ENCODE measurements at regions of chr14 and their contacts with region 1.

Region 1: DNA sequence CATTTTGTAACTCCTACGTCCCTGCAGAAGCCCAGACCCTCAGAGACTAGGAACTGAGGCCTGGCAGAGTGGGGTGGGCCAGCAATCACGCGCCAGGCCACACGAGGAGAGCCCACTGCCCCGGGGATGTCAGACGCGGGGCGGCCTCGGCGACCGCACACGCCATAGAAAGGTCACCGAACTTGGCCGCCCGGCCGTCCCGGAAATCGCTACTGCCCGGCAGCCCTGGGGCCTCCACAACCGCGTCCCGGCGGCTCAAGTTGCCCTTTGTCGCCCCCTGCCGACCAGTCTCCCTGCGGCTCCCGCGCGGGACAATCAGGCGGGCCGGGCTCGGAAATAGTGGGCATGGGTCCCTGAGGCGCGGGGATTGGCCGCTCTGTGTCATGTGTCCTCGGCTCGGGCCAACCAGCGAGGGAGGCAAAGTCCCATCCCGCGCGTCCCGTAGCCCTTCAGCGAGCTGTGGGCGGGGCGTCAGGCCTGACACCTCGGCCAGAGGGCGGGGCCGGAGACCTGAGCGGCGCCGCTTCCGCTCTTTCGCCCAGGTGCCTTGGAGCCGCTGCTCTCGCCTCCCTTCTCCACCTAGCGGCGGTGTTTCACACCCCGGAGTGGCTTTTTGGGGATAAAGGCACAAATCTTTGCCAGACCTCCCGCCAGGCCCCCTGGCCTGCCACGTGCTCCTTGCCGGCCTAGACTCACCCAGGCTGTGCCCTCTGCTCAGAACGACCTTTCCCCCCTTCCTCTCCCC is 33.4 kb upstream of the DEGS2 start:
- DNase-seq: peak; percentile 97
- ATAC-seq: peak; percentile 98
- H3K4me3 ChIP-seq: peak overlapping the region; percentile 57 to 64
- H3K27ac ChIP-seq: peak overlapping the region; percentile 77
- H3K4me1 ChIP-seq: peaks cover 11 to 19% of the 10 kb centered on the region in 2 experiments
- H3K27me3 ChIP-seq: no peaks in the 10 kb centered on the region
- CTCF ChIP-seq: peak; percentile 69 to 83 (median 73)
- POLR2A ChIP-seq: peak; percentile 68
- RAD21 ChIP-seq: peak; percentile 84

Region 2: DNA sequence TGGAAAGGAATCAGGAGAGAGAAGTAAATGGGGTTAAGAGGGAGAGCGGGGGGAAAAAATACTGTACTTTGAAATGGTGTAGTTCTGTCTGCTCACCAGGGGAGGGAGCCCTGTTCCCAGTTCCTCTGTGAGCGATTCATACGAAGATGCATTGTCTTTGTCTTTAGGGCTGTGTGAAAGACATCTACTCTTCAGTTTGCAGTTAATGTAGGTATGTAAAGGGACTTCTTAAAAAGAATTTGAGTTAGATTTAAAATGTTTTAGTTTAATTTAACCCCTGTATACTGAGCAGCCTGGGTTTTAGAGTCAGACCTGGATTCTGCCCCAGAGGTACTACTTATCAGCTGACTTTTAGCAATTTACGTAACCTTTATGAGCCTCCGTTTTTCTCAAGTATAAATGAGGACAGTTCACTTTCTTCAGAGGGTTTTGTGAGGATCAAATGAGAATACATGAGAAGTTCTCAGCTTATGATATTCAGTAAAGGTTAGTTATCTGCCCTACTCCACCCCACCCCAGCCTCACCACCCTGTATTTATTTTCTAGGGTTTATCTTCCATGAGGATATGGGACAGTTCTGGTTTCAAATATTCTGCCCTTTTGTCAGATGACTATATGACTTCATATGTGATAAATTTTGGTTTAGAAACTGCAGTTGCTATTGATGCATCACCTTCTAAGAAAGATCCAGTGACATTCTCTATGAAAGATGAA is 210.2 kb before region 1 on chr14:
- CTCF ChIA-PET with region 1: interaction called, 17 read pairs
- POLR2A ChIA-PET with region 1: interaction called, 4 read pairs
- RAD21 ChIA-PET with region 1: interaction called, 3 to 4 read pairs
- intact Hi-C with region 1: loop called (anchors 1 kb)
- DNase-seq: peak; percentile 34
- ATAC-seq: peak; percentile 96
- H3K4me3 ChIP-seq: no peak overlapping the region
- H3K27ac ChIP-seq: no peak overlapping the region
- H3K4me1 ChIP-seq: no peaks in the 10 kb centered on the region
- H3K27me3 ChIP-seq: no peaks in the 10 kb centered on the region
- CTCF ChIP-seq: peak; percentile 79 to 92 (median 87)
- POLR2A ChIP-seq: no peak
- RAD21 ChIP-seq: peak; percentile 87

Region 3: GRCh38 chr14:100056964-100057795 is 135.7 kb before region 1 on chr14:
- CTCF ChIA-PET with region 1: no interaction called
- POLR2A ChIA-PET with region 1: no interaction called
- RAD21 ChIA-PET with region 1: no interaction called
- intact Hi-C with region 1: loop called (anchors 2 kb)
- DNase-seq: no peak
- ATAC-seq: peak; percentile 76
- H3K4me3 ChIP-seq: no peak overlapping the region
- H3K27ac ChIP-seq: no peak overlapping the region
- H3K4me1 ChIP-seq: no peaks in the 10 kb centered on the region
- H3K27me3 ChIP-seq: no peaks in the 10 kb centered on the region
- CTCF ChIP-seq: peak; percentile 19 to 41 (median 33); a peak in 2 of 6 replicates
- POLR2A ChIP-seq: no peak
- RAD21 ChIP-seq: peak; percentile 57

Region 4: GRCh38 chr14:100072783-100073346 is 120.0 kb before region 1 on chr14:
- CTCF ChIA-PET with region 1: interaction called, 8 read pairs
- POLR2A ChIA-PET with region 1: no interaction called
- RAD21 ChIA-PET with region 1: interaction called, 3 read pairs
- intact Hi-C with region 1: loop called (anchors 2 kb)
- DNase-seq: peak; percentile 13
- ATAC-seq: peak; percentile 72
- H3K4me3 ChIP-seq: no peak overlapping the region
- H3K27ac ChIP-seq: no peak overlapping the region
- H3K4me1 ChIP-seq: peaks cover 6 to 16% of the 10 kb centered on the region in 2 experiments
- H3K27me3 ChIP-seq: no peaks in the 10 kb centered on the region
- CTCF ChIP-seq: peak; percentile 30 to 55 (median 37); a peak in 4 of 6 replicates
- POLR2A ChIP-seq: no peak
- RAD21 ChIP-seq: peak; percentile 64

Region 5: GRCh38 chr14:100108042-100108825 is 84.6 kb before region 1 on chr14:
- CTCF ChIA-PET with region 1: interaction called, 10 read pairs
- POLR2A ChIA-PET with region 1: no interaction called
- RAD21 ChIA-PET with region 1: interaction called in 1 of 2 experiments, 3 read pairs
- intact Hi-C with region 1: loop called (anchors 2 kb)
- DNase-seq: peak; percentile 48
- ATAC-seq: peak; percentile 98
- H3K4me3 ChIP-seq: no peak overlapping the region
- H3K27ac ChIP-seq: no peak overlapping the region
- H3K4me1 ChIP-seq: peaks cover 0 to 13% of the 10 kb centered on the region in 2 experiments; a peak in 1 of 4 replicates
- H3K27me3 ChIP-seq: no peaks in the 10 kb centered on the region
- CTCF ChIP-seq: peak; percentile 86 to 94 (median 88)
- POLR2A ChIP-seq: no peak
- RAD21 ChIP-seq: peak; percentile 76

Region 6: DNA sequence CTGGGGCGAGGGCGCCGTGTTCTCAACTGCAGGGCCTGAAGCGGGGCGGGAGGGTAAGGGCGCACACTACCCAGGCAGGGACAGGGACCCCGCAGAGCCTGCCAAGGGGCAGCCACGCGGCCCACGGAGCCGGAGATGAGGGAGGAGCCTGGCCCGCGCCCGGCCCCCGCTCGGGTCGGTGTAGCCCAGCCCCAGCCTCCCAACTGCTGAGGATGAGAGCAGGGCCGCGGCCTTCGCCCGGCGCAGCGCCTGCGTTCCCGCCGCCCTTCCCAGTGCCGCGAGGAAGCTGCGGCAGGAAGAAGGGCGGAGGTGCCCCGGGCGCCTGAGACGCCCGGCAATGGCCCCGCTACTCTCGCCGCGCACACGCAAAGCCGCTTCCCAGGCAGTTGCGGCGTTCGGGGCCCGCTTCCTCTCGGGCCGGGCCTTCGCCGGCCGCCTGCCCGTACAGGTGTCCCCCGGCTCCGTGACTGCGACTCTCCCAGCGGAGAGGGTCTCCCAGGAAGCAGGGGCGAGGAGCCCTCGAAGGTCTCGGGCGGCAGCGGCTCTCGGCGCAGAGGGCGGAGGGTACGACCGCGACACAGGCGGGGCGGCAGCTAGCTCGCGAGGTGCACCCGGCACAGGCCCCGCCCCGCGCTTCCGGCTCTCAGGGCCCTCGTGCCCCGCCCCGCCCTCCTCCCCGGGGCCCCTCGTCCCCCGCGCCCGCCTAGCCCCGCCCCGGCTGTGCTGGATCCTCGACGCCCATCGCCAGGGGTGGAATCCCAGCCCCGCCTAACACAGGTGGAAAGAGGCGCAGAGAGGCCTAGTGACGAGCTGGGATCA is 21.3 kb after region 1 on chr14:
- CTCF ChIA-PET with region 1: interaction called, 23 read pairs
- POLR2A ChIA-PET with region 1: interaction called, 4 read pairs
- RAD21 ChIA-PET with region 1: no interaction called
- intact Hi-C with region 1: no loop called
- DNase-seq: peak; percentile 77
- ATAC-seq: peak; percentile 93
- H3K4me3 ChIP-seq: peak overlapping the region; percentile 75 to 84
- H3K27ac ChIP-seq: peak overlapping the region; percentile 93
- H3K4me1 ChIP-seq: peaks cover 20 to 34% of the 10 kb centered on the region in 2 experiments
- H3K27me3 ChIP-seq: no peaks in the 10 kb centered on the region
- CTCF ChIP-seq: no peak
- POLR2A ChIP-seq: peak; percentile 89
- RAD21 ChIP-seq: no peak

Region 7: DNA sequence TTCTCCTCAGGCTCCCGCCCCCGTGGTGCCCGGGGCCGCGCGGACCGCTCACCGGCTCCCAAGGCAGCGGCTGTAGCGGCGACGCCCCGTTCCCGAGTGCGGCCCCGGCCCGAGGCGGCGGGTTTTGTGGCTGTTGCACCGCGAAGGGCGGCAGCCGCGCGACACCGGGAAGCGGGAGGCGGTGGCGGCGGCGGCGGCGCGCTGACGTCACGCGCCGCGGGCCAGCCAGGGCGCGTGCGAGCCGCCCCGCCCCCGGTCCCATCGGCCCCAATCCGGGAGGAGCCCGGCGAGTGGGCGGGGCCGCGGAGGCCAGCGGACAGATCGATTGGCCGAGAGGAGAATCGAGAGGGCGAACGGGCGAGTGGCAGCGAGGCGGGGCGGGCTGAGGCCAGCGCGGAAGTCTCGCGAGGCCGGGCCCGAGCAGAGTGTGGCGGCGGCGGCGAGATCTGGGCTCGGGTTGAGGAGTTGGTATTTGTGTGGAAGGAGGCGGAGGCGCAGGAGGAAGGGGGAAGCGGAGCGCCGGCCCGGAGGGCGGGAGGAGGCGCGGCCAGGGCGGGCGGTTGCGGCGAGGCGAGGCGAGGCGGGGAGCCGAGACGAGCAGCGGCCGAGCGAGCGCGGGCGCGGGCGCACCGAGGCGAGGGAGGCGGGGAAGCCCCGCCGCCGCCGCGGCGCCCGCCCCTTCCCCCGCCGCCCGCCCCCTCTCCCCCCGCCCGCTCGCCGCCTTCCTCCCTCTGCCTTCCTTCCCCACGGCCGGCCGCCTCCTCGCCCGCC is 45.8 kb after region 1 on chr14 and contains the start of gene YY1:
- CTCF ChIA-PET with region 1: interaction called, 7 read pairs
- POLR2A ChIA-PET with region 1: interaction called, 3 read pairs
- RAD21 ChIA-PET with region 1: no interaction called
- intact Hi-C with region 1: loop called (anchors 1 kb)
- DNase-seq: peak; percentile 93
- ATAC-seq: peak; percentile 86
- H3K4me3 ChIP-seq: peak within 1 kb of the TSS; percentile 88 to 98
- H3K27ac ChIP-seq: peak within 1 kb of the TSS; percentile 99
- H3K4me1 ChIP-seq: peaks cover 11 to 33% of the 10 kb centered on the region in 2 experiments
- H3K27me3 ChIP-seq: no peaks in the 10 kb centered on the region
- CTCF ChIP-seq: no peak
- POLR2A ChIP-seq: peak; percentile 42
- RAD21 ChIP-seq: no peak
- total RNA-seq, gene YY1: 111 TPM

Measured in HCT116 (cell line).